Gastrocnemius medialis (tissue), 4 donors: ENCODE measurements at regions of chr5 and their contacts with region 1.

Region 1: DNA sequence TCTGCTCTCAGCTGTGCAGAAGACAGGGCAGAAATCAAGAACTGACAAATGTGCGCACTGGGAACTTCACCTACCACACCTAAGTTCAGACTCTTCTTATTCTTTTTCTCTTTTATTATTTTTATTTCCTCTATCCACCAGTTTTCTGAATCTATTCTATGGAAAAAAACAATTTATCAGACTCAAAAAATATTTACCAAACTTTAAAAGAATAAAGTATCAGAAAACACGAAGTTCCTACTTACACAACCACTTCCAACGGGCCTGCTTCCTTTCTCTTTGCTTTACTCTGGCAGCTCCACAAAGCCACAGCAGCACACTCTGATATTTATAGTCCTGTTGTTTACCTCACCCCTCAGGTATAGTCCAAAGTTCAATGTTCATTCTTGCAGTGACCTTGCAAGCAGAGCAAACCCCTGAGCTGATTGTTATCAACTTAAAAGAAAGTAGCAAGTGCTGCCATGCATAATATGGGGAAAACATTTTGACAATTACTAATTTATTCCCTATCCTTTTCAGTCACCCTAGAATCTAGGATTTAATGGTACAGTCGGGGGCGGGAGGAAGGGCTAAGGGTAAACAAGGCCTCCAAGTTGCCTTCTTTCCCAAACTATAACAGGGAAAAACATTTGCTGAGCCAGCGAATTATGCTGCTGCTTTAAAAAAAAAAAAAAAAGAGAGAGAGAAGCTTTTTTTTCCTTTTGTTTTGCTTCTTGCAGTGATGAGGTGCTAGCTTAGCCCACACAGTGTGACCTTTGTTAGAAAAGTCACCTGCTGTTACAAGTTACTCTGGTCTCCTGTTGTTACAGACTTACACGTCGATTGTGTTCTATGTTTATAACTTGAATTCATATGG is at the start of gene SELENOP:
- DNase-seq: peak; percentile 72 to 74
- ATAC-seq: peak; percentile 96 to 97
- H3K4me3 ChIP-seq: peak within 1 kb of the TSS; percentile 56 to 76 (median 64)
- H3K27ac ChIP-seq: peak within 1 kb of the TSS; percentile 81 to 91 (median 86)
- H3K4me1 ChIP-seq: peaks cover 27 to 30% of the 10 kb centered on the region in 2 donors
- H3K27me3 ChIP-seq: no peaks in the 10 kb centered on the region
- CTCF ChIP-seq: no peak
- POLR2A ChIP-seq: peak; percentile 90 to 95
- total RNA-seq, gene SELENOP: 231 to 290 (median 243) TPM

Region 2: DNA sequence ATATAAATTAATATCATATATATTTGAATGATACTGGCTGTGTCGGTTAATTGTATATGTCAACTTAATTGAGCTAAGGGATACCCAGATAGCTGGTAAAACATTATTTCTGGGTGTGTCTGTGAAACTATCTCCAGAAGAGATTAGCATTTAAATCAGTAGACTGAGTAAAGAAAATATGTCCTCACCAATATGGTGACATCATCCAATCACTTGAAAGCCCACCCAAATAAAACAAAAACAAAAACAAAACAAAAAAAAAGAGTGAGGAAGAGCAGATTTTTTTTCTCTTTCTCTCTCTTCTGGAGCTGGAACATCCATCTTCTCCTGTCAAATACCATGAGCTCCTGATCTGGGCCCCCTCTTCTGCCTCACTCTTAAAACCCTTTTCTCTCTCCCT is 70.9 kb before region 1 on chr5:
- in situ Hi-C with region 1: no loop called
- intact Hi-C with region 1: no loop called
- DNase-seq: no peak
- ATAC-seq: no peak
- H3K4me3 ChIP-seq: no peak overlapping the region
- H3K27ac ChIP-seq: no peak overlapping the region
- H3K4me1 ChIP-seq: no peaks in the 10 kb centered on the region
- H3K27me3 ChIP-seq: no peaks in the 10 kb centered on the region
- CTCF ChIP-seq: no peak
- POLR2A ChIP-seq: no peak

Region 3: DNA sequence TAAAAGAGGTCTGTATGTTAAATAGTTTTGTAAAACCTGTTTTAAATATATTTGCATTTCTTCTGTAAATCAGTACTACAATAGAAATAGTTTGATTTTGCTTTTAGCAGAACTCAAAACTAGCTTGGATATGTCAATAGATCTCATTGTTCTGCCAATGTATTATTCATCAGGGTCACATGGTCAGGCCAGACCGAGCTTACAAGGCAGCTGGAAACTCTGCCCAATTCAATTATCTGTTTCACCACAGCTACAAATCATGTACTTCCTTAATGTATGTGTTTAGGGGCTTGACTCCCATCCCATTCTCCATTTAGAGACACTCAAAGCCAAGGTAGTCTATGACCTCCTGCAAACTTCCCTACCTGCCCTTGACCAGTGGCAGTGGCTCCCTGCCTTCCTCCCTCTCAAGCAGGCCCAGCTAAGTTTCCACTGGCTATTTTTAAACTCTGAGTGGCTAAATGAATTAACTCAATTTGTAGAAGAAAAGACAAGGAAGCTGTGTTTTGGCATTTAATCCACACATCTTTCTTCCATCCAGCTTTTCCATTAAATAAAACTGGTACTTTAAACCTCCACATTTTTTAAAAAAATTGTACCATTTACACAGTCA is 46.3 kb after region 1 on chr5:
- in situ Hi-C with region 1: no loop called
- intact Hi-C with region 1: loop called (anchors 2 kb)
- DNase-seq: no peak
- ATAC-seq: peak; percentile 90 to 92
- H3K4me3 ChIP-seq: peak overlapping the region in 3 of 4 donors; percentile 1 to 4 (median 4)
- H3K27ac ChIP-seq: peak overlapping the region; percentile 63 to 83 (median 75)
- H3K4me1 ChIP-seq: peaks cover 17 to 24% of the 10 kb centered on the region in 2 donors
- H3K27me3 ChIP-seq: no peaks in the 10 kb centered on the region
- CTCF ChIP-seq: no peak
- POLR2A ChIP-seq: no peak